K562 (cell line): ENCODE measurements at regions of chr1 and their contacts with region 1.

Region 1: DNA sequence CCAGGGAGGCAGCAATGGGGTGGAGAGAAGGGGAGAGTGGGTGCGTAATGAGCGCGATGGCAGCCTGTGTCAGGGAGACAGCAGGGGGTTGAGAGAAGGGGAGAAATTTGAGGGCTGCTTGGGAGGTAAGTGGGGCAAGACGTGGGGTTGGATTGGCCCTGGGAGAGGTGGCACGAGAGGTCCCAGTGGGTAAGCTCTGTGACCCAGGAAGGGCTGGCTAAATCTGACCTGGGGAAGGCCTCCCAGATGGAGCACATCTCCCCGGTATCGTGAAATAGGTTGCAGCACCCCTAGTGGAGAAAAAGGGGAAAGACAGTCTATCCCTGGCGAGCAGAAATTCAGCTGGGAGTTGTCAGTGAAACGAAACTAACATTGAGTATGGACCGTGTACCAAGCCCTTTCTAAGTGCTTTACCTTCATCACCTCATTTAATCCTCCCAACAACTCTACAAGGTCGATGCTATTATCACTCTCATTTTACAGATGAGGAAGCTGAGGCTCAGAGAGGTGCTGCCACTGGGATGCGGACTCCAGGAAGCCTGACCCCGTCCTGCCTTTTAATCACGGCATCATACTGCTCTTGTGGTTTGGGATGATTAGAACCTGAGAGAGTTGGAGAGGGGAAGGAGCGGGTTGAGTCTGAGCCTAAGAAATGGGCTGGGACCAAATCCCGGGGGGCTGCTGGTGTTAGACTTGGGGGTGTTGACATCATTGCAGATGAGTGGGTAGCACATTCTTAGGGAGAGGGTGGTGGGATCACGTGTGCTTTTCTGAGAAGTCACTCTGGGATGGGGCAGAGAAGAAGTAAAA is 56.6 kb upstream of the RPL11 start:
- DNase-seq: peak; percentile 76 to 87 (median 86)
- ATAC-seq: peak; percentile 82
- H3K4me3 ChIP-seq: peak overlapping the region; percentile 4; the same call in 1 of the 2 replicates
- H3K27ac ChIP-seq: peak overlapping the region; percentile 35; the same call in 1 of the 3 replicates
- H3K4me1 ChIP-seq: peaks cover 12 to 21% of the 10 kb centered on the region in 2 experiments; a peak in 3 of 5 replicates
- H3K27me3 ChIP-seq: peaks cover 3 to 17% of the 10 kb centered on the region in 2 experiments; a peak in 2 of 5 replicates
- CTCF ChIP-seq: peak; percentile 78 to 98 (median 97)
- EP300 ChIP-seq: no peak
- POLR2A ChIP-seq: no peak
- RAD21 ChIP-seq: peak; percentile 41 to 72

Region 2: GRCh38 chr1:23452011-23452411 is 183.0 kb before region 1 on chr1:
- CTCF ChIA-PET with region 1: no interaction called
- POLR2A ChIA-PET with region 1: no interaction called
- in situ Hi-C with region 1: no loop called
- intact Hi-C with region 1: no loop called
- DNase-seq: no peak
- ATAC-seq: peak; percentile 47
- H3K4me3 ChIP-seq: no peak overlapping the region
- H3K27ac ChIP-seq: no peak overlapping the region
- H3K4me1 ChIP-seq: peaks cover 3 to 10% of the 10 kb centered on the region in 2 experiments; a peak in 4 of 5 replicates
- H3K27me3 ChIP-seq: no peaks in the 10 kb centered on the region
- CTCF ChIP-seq: no peak
- EP300 ChIP-seq: no peak
- POLR2A ChIP-seq: no peak
- RAD21 ChIP-seq: no peak

Region 3: DNA sequence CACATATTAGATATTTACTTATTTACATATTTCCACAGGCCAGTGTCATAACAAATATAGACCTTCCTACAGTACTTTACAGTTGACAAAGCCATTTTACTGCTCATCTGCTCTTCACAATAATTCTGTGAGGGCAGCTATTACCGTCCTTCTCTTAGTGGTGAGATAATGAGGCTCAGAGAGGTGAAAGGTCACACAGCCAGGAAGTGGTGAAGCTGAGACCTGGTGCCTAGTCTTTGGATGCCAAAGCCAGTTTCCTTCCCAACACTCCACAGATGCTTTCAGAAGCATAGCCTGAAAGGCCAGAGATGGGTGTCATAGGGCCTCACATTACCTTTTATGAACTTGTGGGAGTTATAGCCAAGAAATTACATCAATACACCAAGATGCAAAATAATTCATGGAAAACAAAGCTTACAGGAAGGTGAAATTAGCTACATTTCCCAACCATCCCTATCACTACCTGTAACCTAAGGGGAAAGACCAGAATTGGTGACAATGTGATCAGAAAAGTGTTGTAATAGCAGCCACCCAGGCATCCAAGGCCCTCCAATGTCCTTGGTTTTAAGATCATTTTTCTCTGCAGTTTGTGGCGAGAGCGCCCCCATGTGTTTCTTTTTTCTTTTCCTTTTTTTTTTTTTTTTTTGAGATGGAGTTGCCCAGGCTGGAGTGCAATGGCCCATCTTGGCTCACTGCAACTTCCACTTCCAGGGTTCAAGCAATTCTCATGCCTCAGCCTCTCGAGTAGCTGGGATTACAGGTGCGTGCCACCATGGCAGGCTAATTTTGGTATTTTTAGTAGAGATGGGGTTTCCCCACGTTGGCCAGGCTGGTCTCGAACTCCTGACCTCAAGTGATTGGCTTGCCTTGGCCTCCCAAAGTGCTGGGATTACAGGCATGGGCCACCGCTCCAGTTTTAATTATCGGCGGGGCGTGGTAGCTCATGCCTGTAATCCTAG is 30.1 kb after region 1 on chr1:
- CTCF ChIA-PET with region 1: interaction called, 7 read pairs
- POLR2A ChIA-PET with region 1: no interaction called
- in situ Hi-C with region 1: no loop called
- intact Hi-C with region 1: loop called (anchors 2 kb)
- DNase-seq: peak in 2 of 4 experiments; percentile 55 to 62
- ATAC-seq: peak; percentile 80
- H3K4me3 ChIP-seq: no peak overlapping the region
- H3K27ac ChIP-seq: no peak overlapping the region
- H3K4me1 ChIP-seq: peaks cover 0 to 4% of the 10 kb centered on the region in 2 experiments; a peak in 2 of 5 replicates
- H3K27me3 ChIP-seq: peaks cover 4 to 18% of the 10 kb centered on the region in 2 experiments
- CTCF ChIP-seq: peak; percentile 65 to 72 (median 68)
- EP300 ChIP-seq: no peak
- POLR2A ChIP-seq: no peak
- RAD21 ChIP-seq: peak; percentile 34 to 52